GM10248 (cell line): ENCODE measurements at regions of chr19 and their contacts with region 1.

Region 1: DNA sequence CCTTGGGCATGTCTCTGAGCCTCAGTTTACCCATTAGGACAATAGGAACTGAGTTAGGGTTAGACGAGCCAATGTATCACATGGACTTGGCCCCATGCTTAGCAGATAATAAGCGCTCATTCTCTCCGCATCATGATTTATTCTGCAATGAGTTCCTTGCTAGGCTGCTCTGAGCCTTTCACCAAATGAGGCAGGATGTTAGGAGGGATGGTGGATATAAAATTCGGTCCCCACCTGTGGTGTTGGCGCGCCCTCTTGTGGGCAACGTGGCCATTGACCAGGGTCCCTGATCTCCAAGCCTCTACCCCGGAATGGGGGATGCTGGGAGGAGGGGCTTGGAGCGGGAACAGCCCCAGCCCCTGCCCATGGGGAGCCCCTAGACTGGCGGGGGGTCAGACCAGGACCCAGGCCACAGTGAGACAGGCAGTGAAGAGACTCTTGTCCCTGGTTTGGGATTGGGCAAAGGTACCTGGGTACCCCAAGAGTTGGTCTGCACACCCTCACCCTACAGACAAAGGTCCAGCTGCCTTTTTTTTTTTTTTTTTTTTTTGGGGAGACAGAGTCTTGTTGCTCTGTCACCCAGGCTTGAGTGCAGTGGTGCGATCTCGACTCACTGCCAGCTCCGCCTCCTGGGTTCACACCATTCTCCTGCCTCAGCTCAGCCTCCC is 43.9 kb downstream of the CERS4 start:
- DNase-seq: peak; percentile 88
- CTCF ChIP-seq: peak; percentile 84

Region 2: GRCh38 chr19:8158411-8159074 is 94.5 kb before region 1 on chr19:
- CTCF ChIA-PET with region 1: interaction called, 21 read pairs
- POLR2A ChIA-PET with region 1: no interaction called
- DNase-seq: peak; percentile 82
- CTCF ChIP-seq: peak; percentile 66

Region 3: DNA sequence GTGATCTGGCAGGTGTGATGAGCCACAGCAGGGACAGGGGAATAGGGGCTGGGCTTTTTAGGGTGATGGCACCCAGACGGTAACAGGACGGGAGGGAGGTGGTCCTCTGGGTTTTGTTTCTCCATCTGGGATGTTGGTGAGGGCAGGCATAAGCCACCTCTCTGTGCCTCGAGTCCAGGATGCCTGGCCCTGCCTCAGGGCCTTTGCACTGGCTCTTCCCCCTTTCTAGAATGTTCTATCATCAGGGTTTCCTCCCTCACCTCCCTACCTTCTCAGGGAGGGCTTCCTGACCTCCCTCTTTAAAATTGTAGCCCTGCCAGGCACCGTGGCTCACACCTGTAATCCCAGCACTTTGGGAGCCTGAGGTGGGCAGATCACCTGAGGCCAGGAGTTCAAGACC is 37.3 kb before region 1 on chr19:
- CTCF ChIA-PET with region 1: no interaction called
- POLR2A ChIA-PET with region 1: no interaction called
- DNase-seq: no peak
- CTCF ChIP-seq: no peak

Region 4: GRCh38 chr19:8240274-8241229 is 12.5 kb before region 1 on chr19:
- CTCF ChIA-PET with region 1: interaction called, 15 read pairs
- POLR2A ChIA-PET with region 1: no interaction called
- DNase-seq: peak; percentile 92
- CTCF ChIP-seq: no peak

Region 5: DNA sequence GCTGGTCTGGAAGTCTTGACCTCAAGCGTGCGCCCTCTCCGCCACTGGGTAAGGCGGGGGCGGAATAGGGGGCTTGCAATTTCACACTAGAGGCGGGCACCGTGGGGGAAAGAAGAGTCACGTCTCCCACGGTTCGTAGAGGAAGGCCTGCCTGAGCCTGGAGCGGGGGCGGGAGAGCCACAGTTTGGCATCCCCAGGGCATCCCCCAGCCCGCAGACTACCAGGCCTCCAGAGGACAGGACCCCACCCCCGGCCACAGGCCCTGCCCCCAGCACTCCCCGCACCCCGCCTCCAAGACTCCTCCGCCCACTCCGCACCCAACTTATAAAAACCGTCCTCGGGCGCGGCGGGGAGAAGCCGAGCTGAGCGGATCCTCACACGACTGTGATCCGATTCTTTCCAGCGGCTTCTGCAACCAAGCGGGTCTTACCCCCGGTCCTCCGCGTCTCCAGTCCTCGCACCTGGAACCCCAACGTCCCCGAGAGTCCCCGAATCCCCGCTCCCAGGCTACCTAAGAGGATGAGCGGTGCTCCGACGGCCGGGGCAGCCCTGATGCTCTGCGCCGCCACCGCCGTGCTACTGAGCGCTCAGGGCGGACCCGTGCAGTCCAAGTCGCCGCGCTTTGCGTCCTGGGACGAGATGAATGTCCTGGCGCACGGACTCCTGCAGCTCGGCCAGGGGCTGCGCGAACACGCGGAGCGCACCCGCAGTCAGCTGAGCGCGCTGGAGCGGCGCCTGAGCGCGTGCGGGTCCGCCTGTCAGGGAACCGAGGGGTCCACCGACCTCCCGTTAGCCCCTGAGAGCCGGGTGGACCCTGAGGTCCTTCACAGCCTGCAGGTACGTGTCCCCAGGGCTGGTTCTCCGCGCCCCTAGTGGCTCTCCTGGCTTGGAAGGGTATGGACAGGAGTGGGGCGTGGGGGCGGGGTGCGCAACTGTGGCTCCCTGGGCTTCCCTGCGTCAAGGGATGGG is 111.0 kb after region 1 on chr19 and contains the start of gene ANGPTL4:
- CTCF ChIA-PET with region 1: no interaction called
- POLR2A ChIA-PET with region 1: no interaction called
- DNase-seq: peak; percentile 62
- CTCF ChIP-seq: no peak

Region 6: DNA sequence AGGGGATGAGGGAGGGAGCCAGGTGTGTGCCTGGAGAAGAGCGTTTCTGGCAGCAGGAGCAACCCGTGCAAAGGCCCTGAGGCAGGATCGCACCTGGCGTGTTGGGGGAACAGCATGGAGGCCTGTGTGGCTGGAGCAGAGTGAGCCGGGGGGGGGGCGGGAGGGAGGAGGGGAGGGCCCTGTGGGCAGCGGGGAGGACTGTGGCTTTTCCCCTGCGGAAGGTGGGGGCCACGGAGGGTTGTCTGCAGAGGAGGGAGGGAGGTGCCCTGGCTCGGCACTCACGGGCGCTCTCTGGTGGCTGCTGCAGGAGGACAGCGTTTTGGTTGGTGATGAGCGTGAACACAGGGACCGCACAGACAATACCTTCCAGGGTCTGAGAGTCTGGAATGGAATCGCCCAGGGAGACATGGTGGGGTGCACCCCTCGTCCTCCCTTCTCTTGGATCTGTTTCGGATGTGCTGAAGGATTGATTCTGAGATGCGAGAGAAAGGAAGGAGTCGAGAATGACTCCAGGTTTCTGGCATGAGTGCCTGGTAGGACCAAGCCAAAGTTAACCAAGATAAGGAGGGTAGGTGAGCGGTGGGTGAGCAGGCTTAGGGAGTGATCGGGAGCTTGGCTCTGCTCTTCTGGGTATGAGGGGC is 143.6 kb after region 1 on chr19:
- CTCF ChIA-PET with region 1: no interaction called
- POLR2A ChIA-PET with region 1: no interaction called
- DNase-seq: peak; percentile 81
- CTCF ChIP-seq: peak; percentile 63